Activated CD8-positive, alpha-beta memory T cell treated with anti-CD3 and anti-CD28 coated beads, Interleukin-2, amount 10 ng/mL, durations not matched to agents 7 days and 5 days (primary cell): ENCODE measurements at regions of chr1 and their contacts with region 1.

Region 1: DNA sequence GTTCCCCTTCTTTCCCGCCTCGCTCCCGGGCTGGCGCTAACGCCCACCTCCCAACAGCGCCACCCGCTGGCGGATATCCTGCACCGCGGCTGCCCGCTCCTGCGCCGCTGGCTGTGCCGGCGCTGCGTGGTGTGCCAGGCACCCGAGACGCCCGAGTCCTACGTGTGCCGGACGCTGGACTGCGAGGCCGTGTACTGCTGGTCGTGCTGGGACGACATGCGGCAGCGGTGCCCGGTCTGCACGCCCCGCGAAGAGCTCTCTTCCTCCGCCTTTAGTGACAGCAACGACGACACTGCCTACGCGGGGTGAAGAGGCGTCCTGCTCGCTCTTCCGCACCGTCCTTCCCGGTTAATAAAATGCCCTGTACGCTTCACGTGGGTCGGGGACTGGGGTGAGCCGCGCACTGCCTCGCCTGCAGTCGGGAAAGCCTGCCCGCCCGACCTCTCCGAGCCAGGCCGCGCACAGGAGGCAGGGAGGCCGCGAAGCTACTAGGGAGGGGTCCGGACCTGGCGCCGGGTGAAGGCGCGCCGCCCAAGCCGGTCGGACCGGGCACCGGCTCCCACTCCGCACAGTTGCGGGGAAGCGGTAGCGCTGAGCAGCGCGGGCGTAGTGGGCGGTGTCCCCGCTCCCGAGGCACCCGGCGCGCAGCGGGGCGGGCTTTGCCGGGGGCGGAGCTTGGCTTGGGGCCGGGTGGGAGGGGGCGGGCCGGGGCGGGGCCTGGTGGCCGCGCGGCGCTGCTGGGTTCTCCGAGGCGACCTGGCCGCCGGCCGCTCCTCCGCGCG is at the start of gene ADAM15:
- DNase-seq: peak; percentile 83
- ATAC-seq: peak; percentile 90
- H3K4me3 Mint-ChIP-seq: peak within 1 kb of the TSS; percentile 79
- H3K27ac Mint-ChIP-seq: peak within 1 kb of the TSS; percentile 78
- H3K4me1 Mint-ChIP-seq: peaks cover 28% of the 10 kb centered on the region
- H3K27me3 Mint-ChIP-seq: no peaks in the 10 kb centered on the region
- total RNA-seq, gene ADAM15: 41.7 to 47.5 TPM

Region 2: GRCh38 chr1:154982897-154983648 is 67.7 kb before region 1 on chr1 and contains the start of gene FLAD1:
- CTCF ChIA-PET with region 1: interaction called, 13 read pairs
- DNase-seq: peak; percentile 99
- ATAC-seq: peak; percentile 100
- H3K4me3 Mint-ChIP-seq: no peak within 1 kb of the TSS
- H3K27ac Mint-ChIP-seq: no peak within 1 kb of the TSS
- H3K4me1 Mint-ChIP-seq: peaks cover 25% of the 10 kb centered on the region
- H3K27me3 Mint-ChIP-seq: no peaks in the 10 kb centered on the region
- total RNA-seq, gene FLAD1: 48.2 to 63.7 TPM

Region 3: DNA sequence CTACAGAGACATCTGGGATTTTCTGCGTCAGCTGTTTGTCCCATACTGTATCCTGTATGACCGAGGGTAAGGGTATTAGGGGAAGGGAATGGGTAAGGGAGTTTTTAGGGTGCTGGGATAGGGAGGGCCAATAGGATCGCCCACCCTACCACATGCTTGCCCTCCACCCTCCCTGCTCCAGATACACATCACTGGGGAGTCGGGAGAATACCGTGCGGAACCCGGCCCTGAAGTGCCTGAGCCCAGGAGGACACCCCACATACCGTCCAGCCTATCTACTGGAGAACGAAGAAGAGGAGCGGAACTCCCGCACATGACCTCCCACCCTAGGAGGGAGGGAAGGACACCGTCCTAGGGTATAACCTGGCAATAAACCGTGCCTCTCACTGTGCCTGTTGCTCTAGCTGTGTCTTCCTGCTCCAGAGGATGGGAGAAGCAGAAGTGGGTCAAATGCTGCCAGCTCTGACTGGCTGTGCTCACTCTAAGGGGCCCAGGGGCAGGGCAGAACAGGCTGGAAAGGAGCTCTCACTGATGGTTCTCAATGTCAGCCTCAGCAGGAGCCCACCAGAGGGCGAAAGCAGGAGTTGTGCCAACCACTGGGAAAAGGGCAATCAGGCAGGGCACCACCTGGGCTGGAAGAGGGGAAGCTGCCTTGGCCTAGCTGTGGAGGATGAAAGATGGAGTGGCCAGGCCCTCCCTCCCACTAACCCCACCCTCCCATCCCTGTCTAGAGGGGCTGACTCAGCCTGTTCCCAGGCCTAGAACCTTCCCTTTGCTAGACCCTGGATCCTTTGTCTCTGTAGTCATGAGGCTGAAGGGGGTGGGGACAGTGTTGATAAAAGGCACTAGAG is 57.8 kb before region 1 on chr1:
- CTCF ChIA-PET with region 1: interaction called, 10 read pairs
- DNase-seq: no peak
- ATAC-seq: no peak
- H3K4me3 Mint-ChIP-seq: no peak overlapping the region
- H3K27ac Mint-ChIP-seq: no peak overlapping the region
- H3K4me1 Mint-ChIP-seq: peaks cover 18% of the 10 kb centered on the region
- H3K27me3 Mint-ChIP-seq: no peaks in the 10 kb centered on the region